CD8-positive, alpha-beta T cell (primary cell): ENCODE measurements at regions of chr11 and their contacts with region 1.

Region 1: DNA sequence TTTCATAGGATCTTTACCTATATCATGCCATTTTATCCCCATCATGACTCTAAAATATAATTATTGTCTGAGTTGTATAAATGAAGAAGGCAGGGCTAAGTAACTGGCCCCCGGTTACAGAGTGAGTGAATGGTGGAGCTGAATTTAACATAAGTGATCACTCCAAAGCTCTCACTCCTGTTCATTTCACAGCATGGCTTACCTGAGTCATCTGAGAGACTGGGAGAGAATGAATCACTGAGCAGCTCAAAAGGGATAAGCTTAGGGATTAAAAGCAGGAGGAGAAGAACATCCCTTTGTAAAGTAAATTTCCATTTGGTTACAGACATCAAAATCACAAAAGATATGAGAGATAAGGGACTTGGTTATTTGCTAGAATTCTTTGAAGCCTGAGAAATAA is 294.0 kb upstream of the CTSC start:
- DNase-seq: no peak
- ATAC-seq: no peak
- H3K4me3 ChIP-seq: no peak overlapping the region
- H3K4me3 Mint-ChIP-seq: no peak overlapping the region
- H3K27ac ChIP-seq: no peak overlapping the region
- H3K27ac Mint-ChIP-seq: no peak overlapping the region
- H3K4me1 ChIP-seq: no peaks in the 10 kb centered on the region
- H3K4me1 Mint-ChIP-seq: no peaks in the 10 kb centered on the region
- H3K27me3 ChIP-seq: no peaks in the 10 kb centered on the region
- H3K27me3 Mint-ChIP-seq: no peaks in the 10 kb centered on the region
- CTCF ChIP-seq: no peak

Region 2: DNA sequence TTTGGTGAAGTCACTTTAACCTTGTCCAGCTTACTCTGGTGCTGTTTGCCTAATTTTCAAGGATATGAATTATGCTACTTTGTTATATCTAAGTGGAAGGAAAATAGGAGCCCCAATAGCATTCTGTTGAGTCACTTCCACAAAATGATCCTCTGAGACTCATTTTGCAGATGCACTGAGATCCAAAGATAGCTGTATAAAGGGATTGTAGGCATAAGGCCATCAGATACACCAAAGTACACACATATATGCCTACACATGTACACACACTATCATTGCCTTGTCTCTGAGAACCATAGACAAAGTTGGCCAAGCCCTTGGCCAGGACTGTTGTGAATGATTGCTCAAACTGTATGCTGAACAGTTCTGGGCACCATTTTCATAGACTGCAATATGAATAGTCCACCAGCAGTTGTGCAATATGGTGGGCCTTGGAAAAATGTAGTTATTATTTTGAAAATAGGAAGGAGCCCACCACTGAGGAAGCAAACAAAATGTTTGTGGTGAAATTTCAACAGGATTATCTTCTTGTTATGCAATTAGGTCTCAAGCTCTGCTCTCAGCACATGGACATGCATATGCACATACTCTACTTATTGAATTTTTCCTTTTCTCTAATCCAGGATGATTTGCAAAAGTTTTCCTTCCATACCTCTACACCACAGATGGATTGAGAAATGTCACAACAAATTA is 108.0 kb before region 1 on chr11:
- CTCF ChIA-PET with region 1: no interaction called
- POLR2A ChIA-PET with region 1: no interaction called
- intact Hi-C with region 1: no loop called
- DNase-seq: no peak
- ATAC-seq: no peak
- H3K4me3 ChIP-seq: no peak overlapping the region
- H3K4me3 Mint-ChIP-seq: no peak overlapping the region
- H3K27ac ChIP-seq: no peak overlapping the region
- H3K27ac Mint-ChIP-seq: no peak overlapping the region
- H3K4me1 ChIP-seq: no peaks in the 10 kb centered on the region
- H3K4me1 Mint-ChIP-seq: no peaks in the 10 kb centered on the region
- H3K27me3 ChIP-seq: no peaks in the 10 kb centered on the region
- H3K27me3 Mint-ChIP-seq: peaks cover 3% of the 10 kb centered on the region
- CTCF ChIP-seq: no peak

Region 3: DNA sequence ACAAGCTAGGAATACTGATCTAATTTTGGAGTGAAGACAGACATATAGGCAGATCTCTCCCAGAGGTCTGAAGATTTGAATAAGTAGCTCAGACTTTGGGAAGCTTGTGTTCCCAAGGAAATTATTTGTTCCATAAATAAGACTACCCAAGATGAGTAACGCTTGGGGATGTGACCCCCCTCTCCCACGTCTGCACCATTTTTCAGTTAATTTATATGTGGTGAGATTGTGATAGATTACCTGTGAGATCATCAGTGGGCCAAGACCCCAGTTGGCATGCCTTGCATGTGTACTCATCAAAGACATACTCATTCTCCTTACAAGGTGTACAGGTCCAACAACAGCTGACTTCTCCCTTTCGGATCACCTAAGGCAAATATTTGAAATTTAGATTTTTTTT is 41.1 kb before region 1 on chr11:
- CTCF ChIA-PET with region 1: no interaction called
- POLR2A ChIA-PET with region 1: no interaction called
- intact Hi-C with region 1: loop called in 1 of 2 experiments (anchors 5 kb)
- DNase-seq: no peak
- ATAC-seq: no peak
- H3K4me3 ChIP-seq: no peak overlapping the region
- H3K4me3 Mint-ChIP-seq: no peak overlapping the region
- H3K27ac ChIP-seq: no peak overlapping the region
- H3K27ac Mint-ChIP-seq: no peak overlapping the region
- H3K4me1 ChIP-seq: no peaks in the 10 kb centered on the region
- H3K4me1 Mint-ChIP-seq: peaks cover 12% of the 10 kb centered on the region
- H3K27me3 ChIP-seq: no peaks in the 10 kb centered on the region
- H3K27me3 Mint-ChIP-seq: no peaks in the 10 kb centered on the region
- CTCF ChIP-seq: no peak

Region 4: DNA sequence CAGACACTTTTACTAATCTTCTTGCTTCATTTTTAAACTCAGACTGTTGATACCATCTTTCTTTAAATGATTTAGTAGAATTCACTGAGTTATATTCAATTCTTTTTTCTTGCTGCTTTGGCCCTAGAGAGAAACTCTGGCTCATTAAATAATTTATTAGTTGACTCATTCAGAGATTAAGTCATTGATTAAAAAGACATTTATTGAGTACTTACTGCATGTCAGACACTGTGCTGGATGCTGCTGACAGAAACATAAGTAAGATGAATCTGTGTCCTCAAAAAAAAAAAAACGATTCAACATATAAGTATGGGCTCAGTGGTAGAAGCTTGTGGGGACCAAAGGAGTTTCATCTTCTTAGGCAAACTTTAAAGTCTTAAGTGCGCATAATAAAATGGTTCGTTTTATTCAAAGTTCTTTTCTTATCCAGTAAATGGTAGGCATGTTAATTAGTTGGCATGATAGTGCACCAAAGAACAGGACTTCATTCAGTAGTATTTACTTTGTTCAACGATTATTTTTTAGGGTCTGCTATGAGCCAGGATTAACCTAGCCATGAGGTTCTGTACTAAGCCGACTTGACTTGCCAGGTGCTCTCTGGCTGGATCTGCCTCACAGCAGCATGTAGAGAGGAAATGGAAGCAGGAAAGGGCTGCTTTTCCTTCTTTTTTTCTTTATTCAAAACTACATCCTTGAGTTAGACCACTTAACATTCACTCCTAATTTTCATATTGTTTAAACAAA is 13.0 kb before region 1 on chr11:
- CTCF ChIA-PET with region 1: no interaction called
- POLR2A ChIA-PET with region 1: no interaction called
- intact Hi-C with region 1: no loop called
- DNase-seq: no peak
- ATAC-seq: no peak
- H3K4me3 ChIP-seq: no peak overlapping the region
- H3K4me3 Mint-ChIP-seq: no peak overlapping the region
- H3K27ac ChIP-seq: no peak overlapping the region
- H3K27ac Mint-ChIP-seq: no peak overlapping the region
- H3K4me1 ChIP-seq: no peaks in the 10 kb centered on the region
- H3K4me1 Mint-ChIP-seq: no peaks in the 10 kb centered on the region
- H3K27me3 ChIP-seq: no peaks in the 10 kb centered on the region
- H3K27me3 Mint-ChIP-seq: peaks cover 5% of the 10 kb centered on the region
- CTCF ChIP-seq: no peak